ENCODE measurements at regions of chr6 and their contacts with region 1.

Region 1: GRCh38 chr6:144758626-144759025 is 473.5 kb downstream of the UTRN start:
- DNase-seq: no peak
- ATAC-seq: no peak
- H3K4me3 ChIP-seq: no peak overlapping the region
- H3K4me3 Mint-ChIP-seq: no peak overlapping the region
- H3K27ac ChIP-seq: no peak overlapping the region
- H3K27ac Mint-ChIP-seq: no peak overlapping the region
- H3K4me1 ChIP-seq: no peaks in the 10 kb centered on the region
- H3K4me1 Mint-ChIP-seq: peaks cover 0 to 2% (median 0%) of the 10 kb centered on the region in 3 donors
- H3K27me3 ChIP-seq: no peaks in the 10 kb centered on the region
- H3K27me3 Mint-ChIP-seq: no peaks in the 10 kb centered on the region

Region 2: GRCh38 chr6:144664281-144664680 is 94.3 kb before region 1 on chr6:
- CTCF ChIA-PET with region 1: no interaction called
- POLR2A ChIA-PET with region 1: interaction called in 1 of 2 experiments, 13 read pairs
- DNase-seq: no peak
- ATAC-seq: no peak
- H3K4me3 ChIP-seq: no peak overlapping the region
- H3K4me3 Mint-ChIP-seq: no peak overlapping the region
- H3K27ac ChIP-seq: no peak overlapping the region
- H3K27ac Mint-ChIP-seq: peak overlapping the region; percentile 7 to 69
- H3K4me1 ChIP-seq: peaks cover 23 to 25% of the 10 kb centered on the region in 2 experiments
- H3K4me1 Mint-ChIP-seq: peaks cover 75 to 88% (median 84%) of the 10 kb centered on the region in 3 donors
- H3K27me3 ChIP-seq: no peaks in the 10 kb centered on the region
- H3K27me3 Mint-ChIP-seq: no peaks in the 10 kb centered on the region